Tibial artery (tissue), 4 donors: ENCODE measurements at regions of chr3 and their contacts with region 1.

Region 1: DNA sequence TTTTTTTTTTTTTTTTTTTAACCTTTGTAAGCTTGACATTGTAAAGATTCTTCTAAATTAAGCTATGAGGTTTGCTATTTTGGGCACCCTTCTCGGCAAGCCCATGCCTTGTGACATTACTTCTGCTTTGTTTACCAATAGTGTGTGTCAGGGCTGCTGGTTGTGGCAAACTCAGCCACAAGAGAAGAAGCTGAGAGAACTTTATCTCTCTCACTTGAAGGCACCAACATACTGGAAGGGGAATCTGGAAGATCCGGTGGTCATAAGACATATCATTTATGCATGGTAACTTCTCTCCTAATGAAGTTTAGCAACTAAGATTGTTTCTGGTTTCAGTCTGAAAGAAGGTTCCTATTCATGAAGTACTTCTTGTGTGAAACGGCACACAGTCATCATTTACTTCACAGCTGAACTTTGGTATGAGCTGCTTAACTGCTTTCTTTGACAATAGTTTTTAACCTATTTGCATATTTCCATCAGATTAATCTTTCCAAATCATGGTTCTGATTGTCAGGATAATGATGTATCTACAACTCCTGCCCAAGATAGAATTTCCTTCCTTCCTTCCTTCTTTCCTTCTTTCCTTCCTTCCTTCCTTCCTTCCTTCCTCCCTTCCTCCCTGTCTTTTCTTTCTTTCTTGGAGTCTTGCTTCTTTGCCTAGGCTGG is 189.3 kb downstream of the NFKBIZ start:
- DNase-seq: no peak
- H3K4me3 ChIP-seq: no peak overlapping the region
- H3K27ac ChIP-seq: peak overlapping the region; percentile 2 to 55
- H3K4me1 ChIP-seq: peaks cover 0 to 21% (median 1%) of the 10 kb centered on the region in 4 donors
- H3K27me3 ChIP-seq: no peaks in the 10 kb centered on the region
- CTCF ChIP-seq: no peak

Region 2: DNA sequence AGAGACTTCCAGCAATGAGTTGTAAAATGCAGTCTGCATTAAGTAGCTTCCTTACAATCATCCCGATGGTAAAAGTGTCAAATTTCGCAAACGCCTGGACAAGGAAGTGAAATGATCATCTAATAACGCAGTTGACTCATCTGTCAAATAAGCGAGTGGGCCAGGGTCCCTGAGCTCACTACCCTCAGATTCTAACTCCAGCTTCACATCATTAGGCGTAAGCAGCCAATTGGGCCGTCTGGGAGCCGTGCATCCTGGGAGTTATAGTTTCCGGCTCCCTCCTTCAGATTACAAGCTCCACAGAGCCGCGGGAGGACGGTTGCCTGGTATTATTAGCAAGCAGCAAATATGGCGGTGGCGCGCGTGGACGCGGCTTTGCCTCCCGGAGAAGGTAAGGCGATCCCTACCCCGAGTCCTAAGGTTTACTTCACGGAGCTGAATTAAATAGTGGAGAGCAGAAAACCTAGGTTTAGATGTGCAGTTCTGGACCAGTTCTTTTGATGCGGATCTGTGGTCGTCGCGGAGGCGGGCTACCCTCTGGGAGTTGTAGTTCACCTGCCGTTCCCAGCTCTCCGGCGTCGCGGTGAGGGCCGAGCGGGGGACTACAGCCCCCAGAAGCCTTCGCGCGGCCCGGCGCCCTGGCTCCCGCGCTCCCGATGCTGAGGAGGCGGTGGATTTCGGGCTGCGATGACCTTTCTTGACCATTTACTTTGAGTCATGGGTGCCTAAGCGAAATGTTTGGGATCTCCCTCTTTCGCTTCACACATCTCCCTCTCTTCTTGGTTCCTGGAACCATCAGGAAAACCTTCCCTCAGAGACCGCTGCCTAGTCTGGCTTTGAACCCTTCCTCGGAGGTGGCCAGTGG is 314.0 kb before region 1 on chr3 and contains the start of gene CEP97:
- intact Hi-C with region 1: no loop called
- DNase-seq: peak; percentile 95
- H3K4me3 ChIP-seq: peak within 1 kb of the TSS; percentile 67 to 82
- H3K27ac ChIP-seq: peak within 1 kb of the TSS; percentile 71 to 82
- H3K4me1 ChIP-seq: peaks cover 0 to 22% (median 0%) of the 10 kb centered on the region in 4 donors
- H3K27me3 ChIP-seq: no peaks in the 10 kb centered on the region
- CTCF ChIP-seq: no peak

Region 3: DNA sequence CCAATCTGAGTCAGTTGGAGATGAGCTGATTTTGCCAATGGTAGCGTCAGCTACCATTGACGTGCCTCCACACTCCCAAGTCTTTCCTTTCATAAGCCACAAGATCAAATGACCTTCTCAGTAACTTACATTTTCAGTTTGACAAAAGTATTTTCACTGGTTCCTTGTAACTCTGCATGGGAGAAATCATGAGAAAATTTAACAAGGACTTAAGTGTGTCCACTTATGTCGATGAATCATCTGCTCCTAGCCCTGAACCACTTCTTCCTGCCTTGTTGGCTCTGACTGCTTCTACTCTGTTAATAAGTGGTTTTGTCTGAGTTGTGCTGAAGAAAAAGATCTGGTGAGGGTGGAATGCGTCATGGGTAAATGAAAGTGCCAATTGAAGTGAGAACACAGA is 88.1 kb before region 1 on chr3:
- intact Hi-C with region 1: no loop called
- DNase-seq: no peak
- H3K4me3 ChIP-seq: no peak overlapping the region
- H3K27ac ChIP-seq: peak overlapping the region; percentile 22 to 31
- H3K4me1 ChIP-seq: peaks cover 0 to 19% (median 2%) of the 10 kb centered on the region in 4 donors
- H3K27me3 ChIP-seq: no peaks in the 10 kb centered on the region
- CTCF ChIP-seq: no peak

Region 4: DNA sequence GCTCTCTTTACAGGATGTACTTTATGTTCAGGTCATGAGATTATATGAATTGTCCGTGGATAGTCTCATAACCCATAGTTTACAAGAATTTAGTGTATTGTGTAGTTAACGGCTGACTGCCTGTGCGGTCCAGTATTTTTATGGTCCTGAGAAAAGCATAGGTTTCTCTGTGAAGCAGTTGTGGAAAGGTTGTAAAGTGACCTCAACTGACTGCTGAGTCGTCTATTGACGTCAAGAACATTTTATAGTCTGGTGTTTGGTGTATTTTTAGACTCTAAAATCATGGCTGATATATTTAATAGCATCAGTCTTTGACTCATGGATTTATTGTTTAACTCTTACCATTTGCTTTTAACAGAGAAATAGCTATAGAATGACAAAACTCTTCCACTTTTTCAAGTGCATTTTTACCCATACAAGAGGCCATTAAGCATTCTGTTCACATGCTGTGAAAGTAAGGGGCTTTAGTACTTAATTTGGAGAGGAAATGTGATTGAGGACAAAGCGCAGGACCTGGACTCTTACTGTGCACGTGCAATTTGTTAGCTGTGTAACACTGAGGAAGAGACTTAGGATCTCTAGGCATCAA is 51.4 kb after region 1 on chr3:
- intact Hi-C with region 1: loop called (anchors 10 kb)
- DNase-seq: no peak
- H3K4me3 ChIP-seq: no peak overlapping the region
- H3K27ac ChIP-seq: peak overlapping the region; percentile 53 to 58
- H3K4me1 ChIP-seq: peaks cover 0 to 30% (median 4%) of the 10 kb centered on the region in 4 donors
- H3K27me3 ChIP-seq: no peaks in the 10 kb centered on the region
- CTCF ChIP-seq: no peak